Endothelial cell of umbilical vein (primary cell): ENCODE measurements at regions of chr17 and their contacts with region 1.

Region 1: DNA sequence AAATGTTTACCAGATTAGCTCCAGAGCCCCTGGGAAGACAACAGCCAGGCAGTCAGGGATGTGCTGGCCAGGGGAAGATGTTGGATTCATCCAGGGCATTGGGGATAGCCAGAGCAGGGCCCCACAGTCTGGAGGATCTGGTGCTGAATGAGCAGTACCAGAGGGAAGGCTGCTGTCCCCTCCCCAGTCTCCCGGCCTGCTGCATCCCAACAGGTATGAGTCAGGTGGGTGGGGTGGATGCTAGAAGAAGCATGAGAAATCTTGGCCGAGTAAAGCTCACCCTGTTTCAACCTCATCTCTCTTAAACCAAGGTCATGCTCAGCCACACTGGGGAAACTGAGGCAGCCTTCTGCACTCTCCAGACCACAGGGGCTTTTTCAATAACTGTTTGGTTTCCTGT is 71.9 kb upstream of the SEC14L1 start:
- DNase-seq: no peak
- H3K4me3 ChIP-seq: no peak overlapping the region
- H3K27ac ChIP-seq: no peak overlapping the region
- H3K4me1 ChIP-seq: no peaks in the 10 kb centered on the region
- H3K27me3 ChIP-seq: peaks cover 9% of the 10 kb centered on the region in 2 experiments
- CTCF ChIP-seq: no peak
- POLR2A ChIP-seq: no peak

Region 2: DNA sequence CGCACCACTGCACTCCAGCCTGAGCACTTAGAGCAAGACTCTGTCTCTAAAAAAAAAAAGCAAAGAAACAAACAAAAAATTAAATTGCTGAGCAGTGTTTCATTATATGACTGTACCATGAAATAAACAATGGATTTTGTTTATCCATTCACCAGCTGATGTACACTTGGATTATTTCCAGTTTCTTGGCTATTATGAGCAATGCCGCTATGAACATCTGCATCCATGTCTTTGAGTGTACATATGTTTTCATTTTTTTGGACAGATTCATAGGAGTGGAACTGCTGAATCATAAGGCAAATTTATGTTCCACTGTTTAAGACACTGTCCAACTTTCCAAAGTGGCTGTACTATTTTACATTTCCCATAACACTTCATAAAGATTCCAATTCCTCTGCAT is 836.6 kb before region 1 on chr17:
- CTCF ChIA-PET with region 1: no interaction called
- POLR2A ChIA-PET with region 1: no interaction called
- dilution Hi-C with region 1: no loop called
- intact Hi-C with region 1: no loop called
- DNase-seq: no peak
- H3K4me3 ChIP-seq: no peak overlapping the region
- H3K27ac ChIP-seq: no peak overlapping the region
- H3K4me1 ChIP-seq: no peaks in the 10 kb centered on the region
- H3K27me3 ChIP-seq: peaks cover 22 to 27% of the 10 kb centered on the region in 2 experiments
- CTCF ChIP-seq: no peak
- POLR2A ChIP-seq: no peak

Region 3: GRCh38 chr17:76816590-76817135 is 252.3 kb before region 1 on chr17:
- CTCF ChIA-PET with region 1: interaction called, 17 read pairs
- POLR2A ChIA-PET with region 1: no interaction called
- dilution Hi-C with region 1: no loop called
- intact Hi-C with region 1: no loop called
- DNase-seq: peak; percentile 41
- H3K4me3 ChIP-seq: no peak overlapping the region
- H3K27ac ChIP-seq: no peak overlapping the region
- H3K4me1 ChIP-seq: no peaks in the 10 kb centered on the region
- H3K27me3 ChIP-seq: peaks cover 0 to 3% of the 10 kb centered on the region in 2 experiments
- CTCF ChIP-seq: peak; percentile 57 to 73
- POLR2A ChIP-seq: no peak

Region 4: DNA sequence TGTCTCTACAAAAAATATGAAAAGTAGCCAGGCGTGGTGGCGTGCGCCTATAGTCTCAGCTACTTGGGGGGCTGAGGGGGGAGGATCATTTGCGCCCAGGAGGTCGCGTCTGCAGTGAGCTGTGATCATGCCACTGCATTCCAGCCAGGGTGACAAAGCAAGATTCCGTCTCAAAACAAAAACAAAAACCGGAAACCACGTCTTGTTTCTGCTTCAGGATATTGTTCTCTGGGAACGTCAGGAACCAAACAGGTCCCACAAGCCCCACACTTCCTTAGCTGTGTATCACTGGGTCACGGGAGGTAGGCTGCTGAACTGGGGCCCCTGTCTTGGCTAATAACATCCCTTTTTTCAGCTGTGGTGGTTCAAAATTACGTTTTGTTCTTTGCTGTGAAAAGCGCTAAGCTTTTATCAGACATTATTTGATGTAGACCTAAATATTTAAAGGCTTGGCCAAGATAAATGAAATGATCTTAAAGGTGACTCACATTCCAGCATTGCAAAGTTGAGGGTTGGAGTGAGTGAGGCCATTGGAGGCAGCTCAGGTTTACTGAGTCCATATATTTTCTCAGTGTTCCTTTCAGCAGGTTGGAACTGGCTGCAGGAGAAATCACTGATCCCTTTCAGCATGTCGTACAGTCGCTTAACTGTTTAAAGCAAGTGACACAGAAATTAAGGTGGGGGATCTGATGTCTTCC is 55.4 kb after region 1 on chr17:
- CTCF ChIA-PET with region 1: no interaction called
- POLR2A ChIA-PET with region 1: no interaction called
- dilution Hi-C with region 1: no loop called
- intact Hi-C with region 1: no loop called
- DNase-seq: peak; percentile 98
- H3K4me3 ChIP-seq: no peak overlapping the region
- H3K27ac ChIP-seq: peak overlapping the region; percentile 98
- H3K4me1 ChIP-seq: peaks cover 63% of the 10 kb centered on the region
- H3K27me3 ChIP-seq: no peaks in the 10 kb centered on the region
- CTCF ChIP-seq: no peak
- POLR2A ChIP-seq: peak; percentile 90